ENCODE measurements at regions of chr2 and their contacts with region 1.

Region 1: GRCh38 chr2:118032169-118033013 is 18.5 kb upstream of the CCDC93 start:
- H3K4me3 ChIP-seq: no peak overlapping the region
- H3K27ac ChIP-seq: no peak overlapping the region
- H3K4me1 ChIP-seq: no peaks in the 10 kb centered on the region
- CTCF ChIP-seq: peak; percentile 81

Region 2: GRCh38 chr2:118056165-118056534 is 23.8 kb after region 1 on chr2:
- CTCF ChIA-PET with region 1: interaction called, 12 read pairs
- POLR2A ChIA-PET with region 1: no interaction called
- H3K4me3 ChIP-seq: no peak overlapping the region
- H3K27ac ChIP-seq: no peak overlapping the region
- H3K4me1 ChIP-seq: peaks cover 4% of the 10 kb centered on the region; the same call in 1 of the 2 replicates
- CTCF ChIP-seq: no peak

Region 3: DNA sequence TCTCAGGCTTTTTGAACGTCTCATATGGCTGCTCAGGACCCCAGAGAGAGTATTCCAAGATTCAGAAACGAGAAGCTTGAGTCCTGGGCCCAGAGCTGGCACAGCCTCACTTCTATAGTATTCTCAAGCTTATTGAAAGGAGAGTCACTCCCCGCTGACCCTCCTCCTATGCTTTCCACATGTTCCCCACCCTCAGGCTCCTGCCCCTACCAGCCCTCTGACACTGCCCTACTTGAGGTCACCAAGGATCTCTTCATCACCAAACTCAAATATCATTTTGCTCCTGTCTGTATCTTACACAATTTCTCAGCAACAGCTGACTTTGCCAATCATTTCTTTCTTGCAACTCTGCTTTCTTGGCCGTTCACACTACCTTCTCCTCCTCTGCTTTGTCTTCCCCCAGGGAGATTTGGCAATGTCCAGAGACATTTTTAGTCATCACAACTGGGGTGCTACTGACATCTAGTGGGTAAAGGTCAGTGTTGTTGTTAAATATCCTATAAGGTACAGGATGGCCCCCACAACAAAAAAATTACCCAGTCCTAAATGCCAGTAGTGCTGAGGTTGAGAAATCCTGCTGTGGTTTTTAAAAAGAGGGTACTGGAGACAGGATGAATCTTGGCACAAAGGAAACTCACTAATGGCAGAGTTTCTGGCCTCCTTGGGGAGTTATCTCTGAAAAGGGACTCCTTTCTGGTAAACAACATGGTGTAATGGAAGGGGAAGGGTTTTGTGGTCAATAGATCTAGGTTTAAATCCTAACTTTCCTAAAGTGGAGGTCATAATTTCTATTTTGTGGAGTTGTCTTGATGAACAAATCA is 29.0 kb after region 1 on chr2:
- CTCF ChIA-PET with region 1: interaction called, 16 read pairs
- POLR2A ChIA-PET with region 1: no interaction called
- H3K4me3 ChIP-seq: no peak overlapping the region
- H3K27ac ChIP-seq: no peak overlapping the region
- H3K4me1 ChIP-seq: peaks cover 13% of the 10 kb centered on the region; the same call in 1 of the 2 replicates
- CTCF ChIP-seq: peak; percentile 68

Region 4: DNA sequence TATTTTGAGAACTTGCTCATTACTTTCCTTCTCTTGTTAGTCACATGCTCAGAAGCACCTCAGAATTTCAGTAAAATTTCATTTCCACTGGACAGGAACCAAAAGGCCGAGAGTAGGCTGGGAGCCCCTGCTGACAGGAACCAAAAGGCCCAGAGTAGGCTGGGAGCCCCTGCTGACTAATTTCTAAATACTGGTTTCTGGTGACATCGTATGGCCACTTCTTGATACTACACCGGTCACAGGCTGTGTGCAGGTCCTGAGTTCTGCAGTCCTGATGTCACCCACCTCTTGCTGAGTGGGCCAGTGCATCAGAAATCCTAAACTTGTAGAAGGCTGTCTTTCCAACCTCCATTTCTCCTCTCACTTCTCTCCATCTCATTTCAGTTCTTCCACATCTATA is 832.7 kb after region 1 on chr2:
- CTCF ChIA-PET with region 1: interaction called, 10 read pairs
- POLR2A ChIA-PET with region 1: no interaction called
- H3K4me3 ChIP-seq: no peak overlapping the region
- H3K27ac ChIP-seq: no peak overlapping the region
- H3K4me1 ChIP-seq: no peaks in the 10 kb centered on the region
- CTCF ChIP-seq: 0 out of 2 replicates have a peak, but pooled peaks have one; percentile 13